Activated CD4-positive, alpha-beta T cell treated with anti-CD3 and anti-CD28 coated beads for 36 hours (primary cell): ENCODE measurements at regions of chr10 and their contacts with region 1.

Region 1: DNA sequence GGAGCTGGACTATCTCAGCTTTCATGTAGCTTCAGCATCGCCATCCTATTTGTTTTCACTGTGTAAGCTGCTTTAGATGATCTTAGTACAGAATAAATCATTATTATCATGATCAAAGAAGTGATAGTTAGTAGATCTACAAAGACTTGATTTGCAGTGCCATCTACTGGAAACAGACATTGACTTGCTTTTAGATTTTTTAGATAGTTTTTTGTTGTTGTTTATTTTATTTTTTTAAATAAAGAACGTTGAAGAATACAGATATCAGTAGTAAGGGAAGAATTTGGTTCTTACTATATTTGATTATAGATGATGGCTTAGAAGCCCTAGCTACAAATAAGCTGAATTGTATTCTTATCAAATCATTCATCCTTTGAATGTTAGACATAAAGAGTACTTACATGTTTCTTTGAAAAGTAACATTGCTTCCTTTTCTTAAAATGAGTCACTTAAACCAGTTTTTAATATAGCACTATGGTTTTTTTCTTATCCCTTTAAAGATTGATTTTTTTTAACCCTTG is 6.3 kb upstream of the SFMBT2 start:
- DNase-seq: no peak
- ATAC-seq: peak; percentile 37
- H3K4me3 Mint-ChIP-seq: no peak overlapping the region
- H3K27ac Mint-ChIP-seq: peak overlapping the region; percentile 34
- H3K4me1 Mint-ChIP-seq: peaks cover 26% of the 10 kb centered on the region
- H3K27me3 Mint-ChIP-seq: peaks cover 9% of the 10 kb centered on the region

Region 2: DNA sequence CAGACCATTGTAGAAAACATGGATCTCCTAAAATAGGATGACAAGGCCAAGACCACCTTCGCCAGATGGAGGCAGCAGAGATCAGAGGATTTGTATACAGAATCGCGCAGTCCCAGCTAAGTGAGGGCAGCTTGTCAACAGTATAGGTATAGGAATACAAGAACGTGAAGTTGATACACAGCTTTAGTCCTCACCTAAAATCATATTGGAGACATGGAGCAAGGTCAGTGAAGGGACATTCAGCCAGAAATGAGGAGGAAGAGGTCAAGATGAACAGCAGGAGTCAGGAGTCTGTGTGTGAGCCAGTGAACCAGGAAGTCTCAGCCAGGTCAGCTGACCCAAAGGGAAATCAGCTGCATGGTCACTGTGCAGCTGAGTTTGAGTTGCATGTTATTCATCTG is 573.7 kb before region 1 on chr10:
- CTCF ChIA-PET with region 1: no interaction called
- POLR2A ChIA-PET with region 1: no interaction called
- intact Hi-C with region 1: loop called in 1 of 2 experiments (anchors 5 kb)
- DNase-seq: peak; percentile 35
- ATAC-seq: no peak
- H3K4me3 Mint-ChIP-seq: no peak overlapping the region
- H3K27ac Mint-ChIP-seq: no peak overlapping the region
- H3K4me1 Mint-ChIP-seq: peaks cover 6% of the 10 kb centered on the region
- H3K27me3 Mint-ChIP-seq: peaks cover 2% of the 10 kb centered on the region